ENCODE measurements at regions of chr5 and their contacts with region 1.

Region 1: DNA sequence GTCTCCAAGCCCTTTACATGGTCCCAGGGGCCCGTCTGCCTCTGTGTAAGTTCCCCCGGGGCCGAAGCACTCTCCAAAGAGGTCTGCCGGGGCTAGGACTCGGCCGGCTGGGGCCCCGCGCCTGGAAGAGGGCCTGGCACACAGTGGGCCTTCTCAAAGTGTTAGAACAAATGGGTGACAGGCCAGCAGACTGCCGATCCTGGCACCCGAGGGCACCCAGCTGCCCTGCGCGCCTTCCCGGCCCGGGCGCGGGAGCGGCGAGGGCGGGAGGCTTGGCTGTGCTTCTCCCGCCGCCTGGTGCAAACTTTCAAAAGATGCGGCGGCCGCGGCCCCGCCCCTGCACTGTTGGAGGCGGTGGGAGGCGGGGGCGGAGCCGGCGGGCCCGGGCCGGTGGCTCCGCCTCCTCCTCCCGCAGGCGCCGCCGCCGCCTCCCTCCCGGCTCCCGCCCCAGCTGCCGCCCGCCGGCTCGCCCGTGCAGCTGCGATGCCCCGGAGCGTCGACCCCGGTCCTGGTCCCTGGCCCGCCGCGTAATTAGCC is at the start of gene NEURL1B:
- DNase-seq: peak in 3 of 9 donors; percentile 9 to 65 (median 11)
- ATAC-seq: peak; percentile 72
- H3K4me3 ChIP-seq: no peak within 1 kb of the TSS
- H3K4me3 Mint-ChIP-seq: peak within 1 kb of the TSS; percentile 40 to 79 (median 60)
- H3K27ac ChIP-seq: no peak within 1 kb of the TSS
- H3K27ac Mint-ChIP-seq: peak within 1 kb of the TSS in 1 of 9 donors; percentile 20
- H3K4me1 ChIP-seq: no peaks in the 10 kb centered on the region
- H3K4me1 Mint-ChIP-seq: peaks cover 6 to 10% (median 7%) of the 10 kb centered on the region in 7 donors
- H3K27me3 ChIP-seq: no peaks in the 10 kb centered on the region
- H3K27me3 Mint-ChIP-seq: peaks cover 38 to 59% (median 43%) of the 10 kb centered on the region in 5 donors
- total RNA-seq, gene NEURL1B: 0.05 to 3.4 (median 0.34) TPM

Region 2: DNA sequence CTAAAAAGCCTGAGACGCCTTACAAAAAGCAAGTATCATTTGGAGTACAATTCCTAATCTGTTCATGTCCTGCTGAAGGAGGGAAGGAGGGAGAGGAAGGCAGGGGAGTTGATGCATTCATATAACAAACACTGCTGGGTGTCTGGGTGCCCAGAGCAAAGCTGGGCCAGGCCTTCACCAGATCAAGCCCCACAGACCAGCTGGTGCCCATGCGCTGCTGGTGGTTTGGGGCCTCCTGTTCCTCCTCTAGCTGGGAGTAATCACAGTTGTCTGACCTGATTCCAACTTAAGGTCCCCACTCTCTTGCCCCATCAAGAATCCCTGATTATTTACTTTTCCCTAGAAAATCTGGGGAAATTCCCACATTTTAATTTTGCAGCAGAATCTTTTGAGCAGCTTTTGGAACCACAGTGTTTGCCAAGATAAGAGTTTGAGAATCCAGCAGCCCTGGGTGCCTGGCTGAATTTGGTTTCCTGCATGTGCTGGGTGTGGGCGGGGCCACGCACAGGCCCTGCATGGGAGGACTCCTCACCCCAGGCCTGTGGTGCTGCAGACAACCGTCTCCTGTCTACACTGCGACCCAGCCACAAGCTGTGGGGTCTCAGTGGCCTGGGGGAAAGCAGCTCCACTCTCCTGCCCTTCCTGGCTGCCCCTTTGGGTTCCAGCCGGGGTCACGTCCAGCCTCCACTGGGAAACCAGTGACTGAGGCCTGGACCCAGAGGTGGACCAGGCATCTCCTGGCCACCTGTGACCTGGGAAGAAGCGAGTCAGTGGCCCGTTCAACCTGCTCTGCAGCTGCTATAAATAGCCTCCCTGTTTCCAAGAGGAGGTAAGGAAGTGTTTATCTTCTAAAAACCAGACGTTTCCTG is 47.7 kb after region 1 on chr5:
- CTCF ChIA-PET with region 1: no interaction called
- POLR2A ChIA-PET with region 1: no interaction called
- intact Hi-C with region 1: loop called in 1 of 2 experiments (anchors 5 kb)
- DNase-seq: peak in 8 of 9 donors; percentile 38 to 62 (median 48)
- ATAC-seq: peak; percentile 68
- H3K4me3 ChIP-seq: no peak overlapping the region
- H3K4me3 Mint-ChIP-seq: peak overlapping the region in 3 of 10 donors; percentile 3 to 41 (median 17)
- H3K27ac ChIP-seq: peak overlapping the region; percentile 64
- H3K27ac Mint-ChIP-seq: peak overlapping the region; percentile 73 to 91 (median 85)
- H3K4me1 ChIP-seq: peaks cover 0 to 14% of the 10 kb centered on the region in 2 donors
- H3K4me1 Mint-ChIP-seq: peaks cover 9 to 21% (median 16%) of the 10 kb centered on the region in 7 donors
- H3K27me3 ChIP-seq: no peaks in the 10 kb centered on the region
- H3K27me3 Mint-ChIP-seq: peaks cover 0 to 9% (median 0%) of the 10 kb centered on the region in 5 donors

Measured in naive thymus-derived CD4-positive, alpha-beta T cell (primary cell).